ENCODE measurements at regions of chr11 and their contacts with region 1.

Region 1: DNA sequence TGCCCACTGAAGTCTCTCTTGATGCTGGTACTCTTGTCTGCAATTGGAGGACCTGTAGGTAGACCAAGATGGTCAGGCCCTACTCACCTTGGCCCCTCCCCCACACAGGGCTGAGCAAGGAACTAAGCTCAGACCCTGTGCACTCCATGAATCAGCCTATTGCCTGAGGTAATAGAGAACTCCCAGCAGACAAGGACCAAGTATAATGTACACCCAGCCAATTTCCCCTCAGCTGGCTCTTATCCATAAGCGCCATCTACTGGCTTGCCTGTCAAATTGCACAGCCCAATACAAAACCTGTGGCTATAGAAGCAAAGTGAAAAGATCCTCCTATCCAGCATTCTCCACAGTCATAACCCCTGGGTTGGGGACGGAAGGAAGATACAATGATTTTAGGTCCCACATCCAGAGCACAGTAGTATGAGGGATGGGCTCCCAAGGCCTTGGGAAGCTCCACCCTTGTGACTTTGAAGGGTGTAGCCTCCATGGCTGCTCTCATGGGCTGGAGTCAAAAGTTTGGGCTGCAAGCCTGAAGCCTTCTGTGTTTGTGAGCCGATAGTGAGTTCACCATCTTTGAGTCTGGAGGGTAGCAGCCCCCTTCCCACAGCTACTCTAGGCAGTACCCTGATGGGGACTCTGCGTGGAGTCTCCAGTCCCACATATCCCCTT is 56.0 kb downstream of the GLYATL2 start:
- DNase-seq: no peak
- ATAC-seq: peak; percentile 62

Region 2: DNA sequence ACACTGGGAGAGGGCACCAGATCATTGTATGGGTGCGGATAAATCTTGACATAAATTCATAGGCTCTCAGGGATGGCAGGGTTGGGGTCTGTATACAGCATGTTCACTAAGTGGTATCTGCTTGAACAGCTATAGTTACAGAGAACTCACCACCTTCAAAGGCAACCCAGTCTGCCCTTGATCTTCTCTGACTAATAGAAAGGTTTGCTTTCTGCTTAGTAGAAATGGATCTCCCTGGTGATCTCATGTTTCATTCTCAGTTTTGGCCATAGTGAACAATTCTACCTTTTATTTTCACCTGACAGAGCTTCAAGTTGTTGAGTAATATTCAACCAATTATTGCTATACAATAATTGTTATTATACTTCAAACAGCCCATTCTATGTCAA is 133.6 kb before region 1 on chr11:
- intact Hi-C with region 1: loop called (anchors 5 kb)
- DNase-seq: no peak
- ATAC-seq: no peak

Region 3: DNA sequence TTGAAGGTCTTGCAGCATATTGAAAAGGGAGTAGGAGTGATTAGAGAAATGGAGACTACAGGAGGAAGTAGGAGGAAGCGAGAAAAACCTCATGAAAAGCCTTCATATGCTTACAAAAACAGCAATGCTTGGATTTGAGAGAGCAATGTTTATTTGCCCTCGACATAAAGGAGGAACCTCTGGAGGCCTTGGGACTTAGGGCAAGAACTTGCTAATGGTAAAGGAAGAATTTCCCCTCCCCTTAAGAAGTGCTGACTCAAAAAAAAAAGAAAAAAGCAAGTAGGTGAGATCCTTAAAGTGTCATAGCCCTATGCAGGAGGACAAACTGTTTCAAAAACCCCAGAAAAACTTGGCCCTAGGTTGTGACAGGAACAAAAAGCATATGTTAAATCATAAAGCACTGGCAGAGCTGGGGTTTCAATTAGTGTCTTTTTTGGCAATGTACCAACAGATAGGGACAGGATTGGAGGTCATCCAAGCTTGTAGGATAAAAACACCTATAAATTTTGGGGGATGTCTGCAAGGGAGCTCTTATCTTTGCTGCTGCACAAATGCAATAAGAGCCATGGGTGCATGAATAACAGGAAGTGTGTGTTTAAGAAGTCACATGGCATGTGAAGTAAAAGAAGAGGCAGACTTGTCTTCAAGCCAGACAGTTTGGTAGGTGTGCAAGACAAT is 61.6 kb before region 1 on chr11:
- intact Hi-C with region 1: loop called (anchors 10 kb)
- DNase-seq: no peak
- ATAC-seq: no peak